ENCODE measurements at regions of chr4 and their contacts with region 1.

Region 1: DNA sequence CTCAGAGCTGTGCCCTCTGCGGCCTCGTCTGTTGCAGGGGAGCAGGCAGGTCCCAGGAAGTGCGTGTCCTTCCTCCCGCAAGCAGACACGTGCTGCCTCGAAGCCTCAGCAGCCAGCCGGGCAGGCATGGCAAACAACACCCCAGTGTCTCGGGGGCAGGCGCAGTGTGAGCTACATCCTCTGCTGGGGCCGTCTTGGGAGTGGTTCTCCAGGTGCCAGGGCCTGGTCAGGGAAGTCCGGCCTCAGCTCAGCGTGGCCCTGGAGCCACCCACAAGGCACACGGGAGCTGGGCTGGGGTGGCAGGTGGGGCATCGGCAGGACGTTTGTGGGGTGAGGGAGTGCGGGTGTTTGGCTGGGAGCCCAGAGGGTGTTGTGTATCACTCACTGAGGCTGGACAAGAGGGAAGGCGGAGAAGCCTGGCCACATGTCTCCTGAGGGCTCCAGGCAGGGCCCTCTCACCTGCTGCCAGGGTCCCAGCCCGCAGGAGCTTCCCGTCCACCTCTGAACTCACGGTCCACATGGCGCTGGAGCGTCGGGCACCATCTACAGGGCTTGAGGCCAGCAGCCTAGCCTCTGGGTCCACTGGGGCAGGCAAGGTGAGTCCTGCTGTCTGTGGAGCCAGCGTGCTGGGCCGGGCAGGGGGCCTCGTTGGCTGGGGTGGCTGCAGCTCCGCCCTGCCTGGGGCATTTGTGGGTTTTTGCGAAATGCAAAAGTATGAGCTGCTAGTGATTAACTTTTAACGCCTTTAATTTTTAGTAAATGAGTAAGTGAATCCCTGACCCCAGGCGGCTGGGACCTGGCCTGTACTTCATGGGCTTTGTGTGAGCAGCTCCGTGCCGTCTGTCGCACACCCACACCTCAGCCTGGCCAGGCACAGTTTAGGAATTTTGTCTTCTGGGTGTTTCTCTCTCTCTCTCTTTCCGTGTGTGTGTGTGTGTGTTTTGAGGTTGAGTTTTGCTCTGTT is 17.3 kb upstream of the UVSSA start:
- DNase-seq: peak in 7 of 9 donors; percentile 30 to 52 (median 45)
- ATAC-seq: peak; percentile 31
- H3K4me3 ChIP-seq: no peak overlapping the region
- H3K4me3 Mint-ChIP-seq: peak overlapping the region in 7 of 10 donors; percentile 72 to 80 (median 77)
- H3K27ac ChIP-seq: peak overlapping the region; percentile 38
- H3K27ac Mint-ChIP-seq: peak overlapping the region; percentile 74 to 96 (median 92)
- H3K4me1 ChIP-seq: peaks cover 32 to 39% of the 10 kb centered on the region in 2 donors
- H3K4me1 Mint-ChIP-seq: peaks cover 22 to 32% (median 31%) of the 10 kb centered on the region in 7 donors
- H3K27me3 ChIP-seq: no peaks in the 10 kb centered on the region
- H3K27me3 Mint-ChIP-seq: no peaks in the 10 kb centered on the region

Region 2: DNA sequence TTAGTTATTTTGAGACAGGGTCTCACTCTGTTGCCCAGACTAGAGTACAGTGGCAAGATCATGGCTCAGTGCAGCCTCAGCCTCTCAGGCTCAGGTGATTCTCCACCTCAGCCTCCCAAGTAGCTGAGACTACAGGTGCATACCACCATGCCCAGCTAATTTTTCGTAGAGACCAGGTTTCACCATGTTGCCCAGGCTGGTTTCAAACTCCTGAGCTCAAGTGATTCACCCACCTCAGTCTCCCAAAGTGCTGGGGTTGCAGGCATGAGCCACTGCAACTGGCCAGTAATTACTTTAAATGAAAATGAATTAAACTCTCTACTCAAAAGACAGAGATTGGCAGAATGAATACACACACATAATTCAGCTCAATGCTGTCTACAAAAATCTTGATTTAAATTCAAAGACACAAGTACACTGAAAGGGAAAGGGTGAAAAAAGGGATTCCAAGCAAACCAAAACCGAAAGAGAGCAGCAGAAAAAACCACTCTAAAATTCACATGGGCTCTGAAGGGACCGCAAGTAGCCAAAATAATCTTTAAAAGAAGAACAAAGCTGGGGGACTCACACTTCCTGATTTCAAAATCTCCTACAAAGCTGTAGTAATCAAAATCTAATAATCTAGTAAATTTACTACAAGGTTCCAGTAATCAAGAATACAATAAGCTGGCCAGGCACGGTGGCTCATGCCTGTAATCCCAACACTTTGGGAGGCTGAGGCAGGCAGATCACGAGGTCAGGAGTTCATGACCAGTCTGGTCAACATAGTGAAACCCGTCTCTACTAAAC is 145.5 kb before region 1 on chr4:
- CTCF ChIA-PET with region 1: no interaction called
- POLR2A ChIA-PET with region 1: no interaction called
- intact Hi-C with region 1: no loop called
- DNase-seq: no peak
- ATAC-seq: peak; percentile 58
- H3K4me3 ChIP-seq: no peak overlapping the region
- H3K4me3 Mint-ChIP-seq: peak overlapping the region in 7 of 10 donors; percentile 15 to 76 (median 48)
- H3K27ac ChIP-seq: no peak overlapping the region
- H3K27ac Mint-ChIP-seq: peak overlapping the region in 1 of 9 donors; percentile 82
- H3K4me1 ChIP-seq: peaks cover 0 to 27% of the 10 kb centered on the region in 2 donors
- H3K4me1 Mint-ChIP-seq: peaks cover 9 to 40% (median 15%) of the 10 kb centered on the region in 7 donors
- H3K27me3 ChIP-seq: no peaks in the 10 kb centered on the region
- H3K27me3 Mint-ChIP-seq: peaks cover 0 to 6% (median 0%) of the 10 kb centered on the region in 5 donors

Region 3: DNA sequence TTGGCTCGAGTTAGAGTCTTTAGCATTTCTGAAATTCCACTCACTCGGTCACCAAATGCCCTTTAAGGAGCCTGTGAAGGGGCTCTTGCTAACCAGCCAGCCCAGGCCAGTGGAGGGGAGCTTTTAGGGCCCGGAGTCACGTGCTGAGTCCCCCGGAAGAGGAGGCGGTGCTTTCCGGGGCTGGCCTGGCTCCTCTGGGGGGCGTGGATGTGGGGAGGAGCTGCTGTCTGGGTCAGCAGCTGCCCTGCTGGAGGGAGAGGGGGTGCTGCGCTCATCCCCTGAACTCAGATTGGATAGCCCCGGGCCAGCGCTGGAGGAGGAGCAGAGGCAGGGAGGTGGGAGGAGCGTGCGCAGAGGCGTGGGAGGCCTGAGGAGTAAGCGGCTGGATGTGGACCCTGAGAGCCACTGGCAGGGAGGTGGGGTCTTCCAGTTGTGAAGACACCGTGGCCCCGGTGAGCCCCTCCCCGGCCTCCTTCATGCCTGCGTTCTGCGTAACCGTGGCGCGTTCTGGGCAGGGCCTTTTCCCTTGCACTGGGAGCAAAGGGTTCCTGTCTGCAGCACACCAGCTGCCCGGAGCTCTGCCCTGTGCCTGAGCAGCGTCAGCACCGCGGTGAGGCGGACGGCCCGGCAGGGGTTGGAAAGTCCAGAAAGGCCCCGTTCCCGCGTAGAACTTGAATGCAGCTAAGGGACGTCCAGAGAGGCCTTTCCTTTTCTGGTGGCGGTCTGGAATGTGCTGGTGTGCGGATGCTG is 20.3 kb before region 1 on chr4:
- CTCF ChIA-PET with region 1: interaction called, 6 read pairs
- POLR2A ChIA-PET with region 1: interaction called, 14 read pairs
- intact Hi-C with region 1: loop called in 1 of 2 experiments (anchors 2 kb)
- DNase-seq: peak in 5 of 9 donors; percentile 17 to 58 (median 47)
- ATAC-seq: peak; percentile 74
- H3K4me3 ChIP-seq: peak overlapping the region; percentile 50
- H3K4me3 Mint-ChIP-seq: peak overlapping the region; percentile 74 to 89 (median 84)
- H3K27ac ChIP-seq: peak overlapping the region; percentile 53
- H3K27ac Mint-ChIP-seq: peak overlapping the region; percentile 66 to 89 (median 85)
- H3K4me1 ChIP-seq: peaks cover 21 to 38% of the 10 kb centered on the region in 2 donors
- H3K4me1 Mint-ChIP-seq: peaks cover 42 to 79% (median 63%) of the 10 kb centered on the region in 7 donors
- H3K27me3 ChIP-seq: no peaks in the 10 kb centered on the region
- H3K27me3 Mint-ChIP-seq: no peaks in the 10 kb centered on the region

Region 4: GRCh38 chr4:1410491-1411325 is 81.0 kb after region 1 on chr4:
- CTCF ChIA-PET with region 1: no interaction called
- POLR2A ChIA-PET with region 1: no interaction called
- intact Hi-C with region 1: no loop called
- DNase-seq: peak in 6 of 9 donors; percentile 22 to 52 (median 34)
- ATAC-seq: peak; percentile 70
- H3K4me3 ChIP-seq: no peak overlapping the region
- H3K4me3 Mint-ChIP-seq: no peak overlapping the region
- H3K27ac ChIP-seq: no peak overlapping the region
- H3K27ac Mint-ChIP-seq: no peak overlapping the region
- H3K4me1 ChIP-seq: no peaks in the 10 kb centered on the region
- H3K4me1 Mint-ChIP-seq: peaks cover 2 to 9% (median 7%) of the 10 kb centered on the region in 7 donors
- H3K27me3 ChIP-seq: no peaks in the 10 kb centered on the region
- H3K27me3 Mint-ChIP-seq: peaks cover 45 to 63% (median 50%) of the 10 kb centered on the region in 5 donors

Measured in naive thymus-derived CD4-positive, alpha-beta T cell (primary cell).